ENCODE measurements at regions of chr3 and their contacts with region 1.

Region 1: GRCh38 chr3:186534113-186534669 is 10.0 kb downstream of the CRYGS start:
- DNase-seq: no peak
- H3K4me3 ChIP-seq: no peak overlapping the region
- H3K27ac ChIP-seq: no peak overlapping the region
- H3K4me1 ChIP-seq: no peaks in the 10 kb centered on the region
- H3K27me3 ChIP-seq: no peaks in the 10 kb centered on the region
- CTCF ChIP-seq: no peak
- POLR2A ChIP-seq: no peak

Region 2: GRCh38 chr3:185983495-185984141 is 550.6 kb before region 1 on chr3:
- intact Hi-C with region 1: loop called (anchors 10 kb)
- DNase-seq: peak; percentile 61 to 65
- H3K4me3 ChIP-seq: peak overlapping the region in 1 of 3 donors; percentile 46
- H3K27ac ChIP-seq: no peak overlapping the region
- H3K4me1 ChIP-seq: peaks cover 0 to 3% of the 10 kb centered on the region in 2 donors
- H3K27me3 ChIP-seq: no peaks in the 10 kb centered on the region
- CTCF ChIP-seq: peak; percentile 82 to 89 (median 84)
- POLR2A ChIP-seq: no peak

Region 3: DNA sequence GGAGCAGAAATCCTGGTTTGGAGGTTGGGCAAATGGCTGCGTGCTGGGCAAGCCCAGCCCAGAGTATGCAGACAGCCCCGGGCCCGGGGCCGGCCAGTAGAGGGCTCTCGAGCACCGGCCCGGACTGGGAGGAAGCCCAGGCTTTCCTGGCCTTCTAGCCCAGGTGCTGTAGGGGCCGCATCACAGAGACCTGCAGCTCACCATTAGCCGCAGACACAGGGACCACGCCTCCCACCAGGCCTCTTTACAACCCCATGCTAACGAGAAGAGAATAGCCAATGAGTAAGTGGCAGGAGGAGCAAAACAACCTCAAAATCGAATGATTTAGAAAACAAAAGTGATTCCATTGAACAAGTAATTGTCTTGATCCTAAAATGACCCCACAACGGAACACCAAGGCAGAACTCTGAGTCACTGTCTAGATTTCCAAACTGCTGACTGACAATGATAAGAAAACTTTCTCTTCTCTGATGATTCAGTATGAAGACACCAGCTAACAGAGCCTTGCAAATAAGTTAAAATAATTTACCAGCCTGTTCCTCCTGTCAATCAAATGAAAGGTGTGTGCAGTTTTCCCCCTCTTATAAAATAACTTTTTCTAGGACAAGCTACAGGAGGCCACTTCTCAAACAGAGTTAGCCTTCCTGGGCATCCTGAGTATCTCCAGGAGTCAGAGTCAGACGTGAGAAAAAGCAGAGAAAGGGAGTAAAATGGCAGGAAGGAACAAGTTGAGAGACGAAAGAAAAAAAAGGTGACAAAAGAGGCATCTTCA is 274.4 kb before region 1 on chr3:
- intact Hi-C with region 1: loop called (anchors 10 kb)
- DNase-seq: peak; percentile 36 to 63
- H3K4me3 ChIP-seq: no peak overlapping the region
- H3K27ac ChIP-seq: no peak overlapping the region
- H3K4me1 ChIP-seq: no peaks in the 10 kb centered on the region
- H3K27me3 ChIP-seq: no peaks in the 10 kb centered on the region
- CTCF ChIP-seq: peak in 2 of 3 donors; percentile 47 to 58
- POLR2A ChIP-seq: no peak

Region 4: DNA sequence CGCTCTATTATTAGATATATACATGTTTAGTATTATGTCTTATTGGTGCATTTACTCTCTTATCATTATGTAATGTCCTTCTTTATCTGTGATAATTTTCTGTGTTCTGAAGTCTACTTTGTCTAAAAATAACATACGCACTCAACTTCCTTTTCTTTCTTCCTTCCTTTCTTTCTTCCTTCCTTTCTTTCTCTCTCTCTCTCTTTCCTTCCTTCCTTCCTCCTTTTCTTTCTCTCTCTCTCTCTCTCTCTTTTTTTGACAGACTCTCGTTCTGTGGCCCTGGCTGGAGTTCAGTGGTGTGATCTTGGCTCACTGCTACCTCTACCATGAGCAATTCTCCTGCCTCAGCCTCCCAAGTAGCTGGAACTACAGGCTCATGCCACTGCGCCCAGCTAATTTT is 323.6 kb after region 1 on chr3:
- intact Hi-C with region 1: no loop called
- DNase-seq: no peak
- H3K4me3 ChIP-seq: no peak overlapping the region
- H3K27ac ChIP-seq: no peak overlapping the region
- H3K4me1 ChIP-seq: no peaks in the 10 kb centered on the region
- H3K27me3 ChIP-seq: no peaks in the 10 kb centered on the region
- CTCF ChIP-seq: no peak
- POLR2A ChIP-seq: no peak

Measured in breast epithelium (tissue), 4 donors.